ENCODE measurements at regions of chr3 and their contacts with region 1.

Region 1: DNA sequence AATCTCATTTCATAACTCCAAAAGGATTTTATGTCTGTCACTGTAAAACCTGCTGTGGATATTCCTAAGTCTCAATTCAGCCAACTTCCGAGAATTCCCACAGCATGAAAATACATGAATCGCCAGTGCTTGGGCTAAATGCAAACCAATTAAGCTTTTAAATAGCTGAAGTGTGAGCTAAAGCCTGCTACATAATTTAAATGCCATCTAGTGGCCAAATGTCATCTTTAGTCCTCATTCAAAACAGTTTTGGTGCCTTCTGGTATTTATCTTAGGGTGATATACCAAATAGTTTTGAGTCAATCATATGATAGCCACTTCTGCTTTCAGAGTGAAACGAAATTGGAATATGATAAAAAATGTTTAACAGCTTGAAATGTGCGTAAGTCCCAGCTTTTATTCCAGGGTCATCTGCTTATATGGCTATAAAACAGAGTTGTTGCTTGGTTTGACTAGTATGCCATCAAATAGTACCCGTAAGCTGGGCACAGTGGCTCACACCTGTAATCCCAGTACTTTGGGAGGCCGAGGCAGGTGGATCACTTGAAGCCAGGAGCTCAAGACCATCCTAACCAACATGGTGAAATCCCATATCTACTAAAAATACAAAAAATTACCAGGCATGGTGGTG is 41.8 kb upstream of the CCNL1 start:
- DNase-seq: peak; percentile 70
- ATAC-seq: peak; percentile 76
- H3K4me3 ChIP-seq: no peak overlapping the region
- H3K27ac ChIP-seq: no peak overlapping the region
- H3K4me1 ChIP-seq: no peaks in the 10 kb centered on the region
- H3K27me3 ChIP-seq: no peaks in the 10 kb centered on the region
- CTCF ChIP-seq: peak; percentile 78

Region 2: DNA sequence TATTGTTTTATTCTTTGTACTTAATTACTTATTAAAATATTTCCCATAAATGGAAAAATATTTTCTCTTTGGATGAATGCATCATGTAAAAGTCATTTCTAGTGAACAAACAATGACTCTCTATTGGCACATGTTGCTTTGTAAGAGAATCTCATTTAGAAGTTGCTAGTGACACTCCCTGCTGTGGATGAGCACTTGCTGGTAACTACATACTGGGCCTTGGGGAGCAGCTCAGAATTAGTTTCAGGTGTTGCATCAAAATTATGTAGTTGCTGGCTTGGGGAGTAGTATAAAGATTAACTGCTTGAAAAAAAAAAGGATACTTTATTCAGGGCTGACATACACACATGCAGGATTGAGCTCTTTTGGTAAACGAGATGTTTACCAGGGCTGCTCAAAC is 1161.7 kb before region 1 on chr3:
- CTCF ChIA-PET with region 1: no interaction called
- POLR2A ChIA-PET with region 1: interaction called, 18 read pairs
- intact Hi-C with region 1: no loop called
- DNase-seq: no peak
- ATAC-seq: no peak
- H3K4me3 ChIP-seq: no peak overlapping the region
- H3K27ac ChIP-seq: no peak overlapping the region
- H3K4me1 ChIP-seq: no peaks in the 10 kb centered on the region
- H3K27me3 ChIP-seq: no peaks in the 10 kb centered on the region
- CTCF ChIP-seq: no peak

Region 3: GRCh38 chr3:157174649-157175498 is 26.9 kb before region 1 on chr3:
- CTCF ChIA-PET with region 1: no interaction called
- POLR2A ChIA-PET with region 1: no interaction called
- intact Hi-C with region 1: loop called (anchors 1 kb)
- DNase-seq: peak; percentile 99
- ATAC-seq: peak; percentile 91
- H3K4me3 ChIP-seq: peak overlapping the region; percentile 90
- H3K27ac ChIP-seq: peak overlapping the region; percentile 84
- H3K4me1 ChIP-seq: peaks cover 15% of the 10 kb centered on the region
- H3K27me3 ChIP-seq: no peaks in the 10 kb centered on the region
- CTCF ChIP-seq: no peak

Region 4: GRCh38 chr3:157220211-157220610 is 18.4 kb after region 1 on chr3:
- CTCF ChIA-PET with region 1: no interaction called
- POLR2A ChIA-PET with region 1: no interaction called
- intact Hi-C with region 1: no loop called
- DNase-seq: peak; percentile 25
- ATAC-seq: peak; percentile 81
- H3K4me3 ChIP-seq: no peak overlapping the region
- H3K27ac ChIP-seq: no peak overlapping the region
- H3K4me1 ChIP-seq: peaks cover 19% of the 10 kb centered on the region
- H3K27me3 ChIP-seq: no peaks in the 10 kb centered on the region
- CTCF ChIP-seq: no peak

Region 5: GRCh38 chr3:157354722-157355121 is 153.0 kb after region 1 on chr3:
- CTCF ChIA-PET with region 1: no interaction called
- POLR2A ChIA-PET with region 1: no interaction called
- intact Hi-C with region 1: loop called (anchors 5 kb)
- DNase-seq: peak; percentile 79
- ATAC-seq: peak; percentile 42
- H3K4me3 ChIP-seq: no peak overlapping the region
- H3K27ac ChIP-seq: no peak overlapping the region
- H3K4me1 ChIP-seq: peaks cover 11% of the 10 kb centered on the region
- H3K27me3 ChIP-seq: no peaks in the 10 kb centered on the region
- CTCF ChIP-seq: peak; percentile 74

Region 6: DNA sequence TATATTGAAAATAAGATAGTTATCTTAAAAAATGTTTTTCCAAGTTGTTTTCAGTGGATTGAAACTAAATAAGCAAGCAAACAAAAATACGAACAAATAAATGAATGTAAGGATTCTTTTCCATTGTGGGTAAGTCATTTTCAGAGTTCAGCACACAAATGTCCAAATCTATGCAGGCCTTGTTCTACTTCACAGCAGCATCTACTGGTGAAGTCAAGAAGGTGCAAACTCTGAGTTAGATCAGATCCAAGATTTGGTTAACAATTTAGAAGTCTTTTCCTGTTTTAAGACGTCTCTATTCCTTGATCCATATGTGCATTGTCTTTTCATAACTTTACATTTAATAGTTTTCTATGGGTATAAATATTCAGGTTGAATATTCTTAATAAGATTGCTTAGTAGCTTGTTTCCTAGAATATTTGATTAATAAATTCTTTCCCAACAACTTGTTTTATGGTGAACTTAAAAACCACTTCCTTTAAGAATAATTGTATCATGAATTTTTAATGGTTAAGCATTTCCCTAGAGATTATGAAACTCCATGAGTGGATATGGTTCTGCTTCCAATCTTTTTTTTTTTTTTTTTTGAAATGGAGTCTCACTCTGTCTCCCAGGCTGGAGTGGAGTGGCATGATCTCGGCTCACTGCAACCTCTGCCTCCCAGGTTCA is 245.4 kb after region 1 on chr3:
- CTCF ChIA-PET with region 1: no interaction called
- POLR2A ChIA-PET with region 1: no interaction called
- intact Hi-C with region 1: loop called (anchors 1 kb)
- DNase-seq: peak; percentile 69
- ATAC-seq: peak; percentile 78
- H3K4me3 ChIP-seq: no peak overlapping the region
- H3K27ac ChIP-seq: no peak overlapping the region
- H3K4me1 ChIP-seq: peaks cover 16% of the 10 kb centered on the region; the same call in 1 of the 2 replicates
- H3K27me3 ChIP-seq: no peaks in the 10 kb centered on the region
- CTCF ChIP-seq: peak; percentile 86

Region 7: DNA sequence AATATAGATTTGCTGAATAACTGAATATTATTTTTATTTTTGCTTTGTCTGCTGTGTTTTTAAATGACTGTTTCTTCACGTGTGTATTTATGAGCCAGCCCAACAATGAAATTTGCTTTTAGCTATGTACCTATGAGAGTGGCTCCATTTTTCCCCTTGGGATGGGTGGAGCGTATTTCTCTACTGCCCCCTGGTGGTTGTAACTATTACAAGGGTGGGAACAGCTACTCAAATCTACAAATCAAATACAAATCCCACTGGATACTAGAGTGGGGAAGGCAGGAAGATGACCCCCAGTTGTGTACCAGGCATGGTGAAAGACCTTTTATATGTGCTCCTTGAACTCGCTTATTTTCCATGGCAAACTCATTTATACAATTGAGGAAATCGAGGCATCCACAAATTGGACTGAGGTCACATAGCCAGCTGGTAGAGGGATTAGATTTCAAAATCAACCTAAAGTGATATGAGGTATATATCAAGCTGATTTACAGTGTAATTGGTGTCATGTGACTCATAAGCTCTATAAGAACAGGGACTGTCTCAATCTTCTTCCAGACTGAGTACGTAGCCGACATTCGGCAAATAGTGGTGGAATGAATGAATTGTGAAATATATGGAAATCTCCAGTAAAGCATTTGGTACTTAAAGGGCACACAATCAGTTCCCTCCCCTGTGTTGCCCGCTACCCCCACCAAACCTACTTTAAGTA is 371.0 kb after region 1 on chr3:
- CTCF ChIA-PET with region 1: interaction called, 3 read pairs
- POLR2A ChIA-PET with region 1: interaction called, 4 read pairs
- intact Hi-C with region 1: loop called (anchors 1 kb)
- DNase-seq: peak; percentile 81
- ATAC-seq: peak; percentile 66
- H3K4me3 ChIP-seq: no peak overlapping the region
- H3K27ac ChIP-seq: no peak overlapping the region
- H3K4me1 ChIP-seq: peaks cover 15% of the 10 kb centered on the region
- H3K27me3 ChIP-seq: no peaks in the 10 kb centered on the region
- CTCF ChIP-seq: peak; percentile 95